GM12878 (cell line): ENCODE measurements at regions of chr5 and their contacts with region 1.

Region 1: GRCh38 chr5:151126199-151126645 is 31.4 kb downstream of the ANXA6 start:
- DNase-seq: peak; percentile 66
- ATAC-seq: peak; percentile 65
- H3K4me3 ChIP-seq: no peak overlapping the region
- H3K27ac ChIP-seq: peak overlapping the region; percentile 75
- H3K4me1 ChIP-seq: peaks cover 65% of the 10 kb centered on the region
- H3K27me3 ChIP-seq: no peaks in the 10 kb centered on the region
- CTCF ChIP-seq: peak; percentile 84 to 92 (median 87)
- EP300 ChIP-seq: no peak
- POLR2A ChIP-seq: peak; percentile 50; the same call in 1 of the 2 replicates
- RAD21 ChIP-seq: peak; percentile 93

Region 2: DNA sequence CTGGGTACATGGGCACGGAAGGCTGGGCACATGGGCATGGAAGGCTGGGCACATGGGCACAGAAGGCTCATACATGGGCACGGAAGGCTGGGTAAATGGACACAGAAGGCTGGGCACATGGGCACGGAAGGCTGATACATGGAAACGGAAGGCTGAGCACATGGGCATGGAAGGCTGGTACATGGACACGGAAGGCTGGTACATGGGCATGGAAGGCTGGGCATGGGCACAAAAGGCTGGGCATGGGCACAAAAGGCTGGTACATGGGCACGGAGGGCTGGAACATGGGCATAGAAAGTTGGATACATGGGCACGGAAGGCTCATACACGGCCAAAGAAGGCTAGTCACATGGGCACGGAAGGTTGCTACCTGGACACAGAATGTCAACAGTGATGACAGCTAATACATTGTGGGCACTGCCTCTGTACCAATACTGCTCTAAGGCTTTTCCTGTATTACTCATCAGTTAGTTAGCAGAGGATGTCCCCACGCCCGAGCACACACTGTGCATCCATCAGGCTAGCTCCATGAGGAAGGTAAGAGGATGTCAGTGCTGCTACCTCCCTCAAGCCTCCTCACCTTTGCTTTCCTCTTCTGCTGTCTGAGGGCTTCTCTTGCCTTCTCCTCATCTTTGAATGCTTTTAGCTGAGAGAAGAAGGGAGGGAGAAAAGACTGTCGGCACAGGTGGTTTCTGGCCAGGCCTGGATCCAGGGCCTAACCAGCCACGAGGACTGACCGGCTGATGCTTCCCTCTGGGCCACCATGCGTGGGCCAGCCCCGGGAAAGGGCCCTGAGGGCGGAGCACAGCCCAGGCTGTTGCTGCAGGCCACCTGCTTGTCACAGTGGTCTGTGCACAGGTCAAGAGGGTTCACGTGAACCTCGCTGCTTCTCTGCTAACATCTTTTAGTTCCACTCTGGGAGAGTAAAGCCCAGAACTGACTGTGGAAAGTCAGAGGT is 91.5 kb before region 1 on chr5:
- CTCF ChIA-PET with region 1: no interaction called
- POLR2A ChIA-PET with region 1: no interaction called
- RAD21 ChIA-PET with region 1: no interaction called
- SMC1A ChIA-PET with region 1: no interaction called
- in situ Hi-C with region 1: no loop called
- intact Hi-C with region 1: no loop called
- DNase-seq: no peak
- ATAC-seq: peak; percentile 27
- H3K4me3 ChIP-seq: no peak overlapping the region
- H3K27ac ChIP-seq: no peak overlapping the region
- H3K4me1 ChIP-seq: no peaks in the 10 kb centered on the region
- H3K27me3 ChIP-seq: no peaks in the 10 kb centered on the region
- CTCF ChIP-seq: no peak
- EP300 ChIP-seq: no peak
- POLR2A ChIP-seq: no peak; the same call in 1 of the 2 replicates
- RAD21 ChIP-seq: no peak

Region 3: DNA sequence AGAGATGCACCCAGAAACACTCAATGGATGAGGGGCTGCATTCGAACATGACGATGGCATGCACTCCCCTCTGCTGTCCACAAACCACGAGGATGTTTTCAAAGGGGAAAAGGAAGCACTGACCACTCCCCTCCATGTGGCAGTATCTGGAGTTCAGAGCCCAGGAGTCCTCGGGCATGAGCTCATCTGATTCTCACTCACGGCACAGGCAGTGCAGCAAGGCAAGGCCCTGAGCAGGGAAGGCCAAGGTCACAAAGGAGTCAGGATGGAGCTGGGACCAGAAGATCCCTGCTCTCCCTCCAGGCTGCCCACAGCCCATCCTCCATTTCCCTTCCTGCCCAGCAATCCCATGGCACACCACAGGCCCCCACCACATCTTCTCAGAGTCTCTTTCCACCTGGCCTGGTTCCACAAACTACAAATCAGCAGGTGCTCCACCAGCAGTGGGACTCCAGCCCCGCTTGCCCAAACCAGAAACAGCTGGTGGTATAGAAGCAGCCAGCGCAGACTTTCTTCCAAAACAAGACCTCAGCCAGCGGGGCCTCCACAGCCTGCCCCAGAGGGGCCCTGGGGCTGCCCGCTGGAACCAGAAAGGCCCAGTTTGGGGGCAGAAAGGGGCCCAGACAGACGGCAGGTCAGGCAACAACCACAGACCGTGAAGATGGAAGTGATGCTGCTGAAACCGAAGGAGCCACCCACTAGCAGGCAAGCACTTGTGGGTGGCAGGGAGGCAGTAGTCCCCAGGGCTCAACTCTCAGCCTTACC is 57.6 kb before region 1 on chr5:
- CTCF ChIA-PET with region 1: interaction called, 7 read pairs
- POLR2A ChIA-PET with region 1: interaction called, 3 read pairs
- RAD21 ChIA-PET with region 1: interaction called, 4 read pairs
- SMC1A ChIA-PET with region 1: interaction called, 13 read pairs
- in situ Hi-C with region 1: no loop called
- intact Hi-C with region 1: no loop called
- DNase-seq: no peak
- ATAC-seq: peak; percentile 78
- H3K4me3 ChIP-seq: peak overlapping the region; percentile 6; the same call in 1 of the 2 replicates
- H3K27ac ChIP-seq: peak overlapping the region; percentile 65
- H3K4me1 ChIP-seq: peaks cover 77% of the 10 kb centered on the region
- H3K27me3 ChIP-seq: no peaks in the 10 kb centered on the region
- CTCF ChIP-seq: no peak
- EP300 ChIP-seq: peak in 1 of 2 experiments; percentile 16; a peak in 1 of 4 replicates
- POLR2A ChIP-seq: no peak; the same call in none of the 2 replicates
- RAD21 ChIP-seq: no peak

Region 4: DNA sequence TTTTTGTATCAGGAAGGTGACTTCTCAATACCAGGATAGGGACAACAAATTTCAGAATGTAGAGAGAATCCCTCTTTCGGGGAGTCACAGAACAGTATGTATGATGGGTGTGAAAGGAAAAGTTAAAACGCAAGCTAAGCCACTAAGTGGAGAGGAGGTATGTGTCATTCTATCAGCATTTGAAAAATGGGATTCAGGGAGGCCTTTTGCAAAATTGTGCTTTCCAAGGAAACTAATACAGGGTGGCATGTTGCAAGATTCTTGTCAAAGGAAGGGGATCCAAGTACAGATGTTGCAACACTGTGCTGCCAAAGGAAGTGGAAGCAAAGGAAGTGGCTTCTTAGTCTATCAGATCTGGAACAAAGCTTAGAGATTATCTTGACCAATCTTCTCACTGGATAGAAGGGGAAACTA is 32.7 kb before region 1 on chr5:
- CTCF ChIA-PET with region 1: interaction called, 24 read pairs
- POLR2A ChIA-PET with region 1: interaction called, 7 read pairs
- RAD21 ChIA-PET with region 1: interaction called, 22 read pairs
- SMC1A ChIA-PET with region 1: interaction called, 25 read pairs
- in situ Hi-C with region 1: no loop called
- intact Hi-C with region 1: no loop called
- DNase-seq: no peak
- ATAC-seq: peak; percentile 2; the same call in 2 of the 3 replicates
- H3K4me3 ChIP-seq: peak overlapping the region; percentile 53
- H3K27ac ChIP-seq: peak overlapping the region; percentile 98
- H3K4me1 ChIP-seq: peaks cover 59% of the 10 kb centered on the region
- H3K27me3 ChIP-seq: no peaks in the 10 kb centered on the region
- CTCF ChIP-seq: no peak
- EP300 ChIP-seq: no peak
- POLR2A ChIP-seq: no peak
- RAD21 ChIP-seq: no peak

Region 5: GRCh38 chr5:151157426-151158286 is 31.4 kb after region 1 on chr5 and contains the start of gene ANXA6:
- CTCF ChIA-PET with region 1: interaction called, 1,107 read pairs
- POLR2A ChIA-PET with region 1: interaction called, 26 read pairs
- RAD21 ChIA-PET with region 1: interaction called, 306 read pairs
- SMC1A ChIA-PET with region 1: interaction called, 1,132 read pairs
- in situ Hi-C with region 1: loop called (anchors 5 kb)
- intact Hi-C with region 1: loop called (anchors 1 kb)
- DNase-seq: no peak
- ATAC-seq: peak; percentile 77
- H3K4me3 ChIP-seq: peak within 1 kb of the TSS; percentile 97
- H3K27ac ChIP-seq: peak within 1 kb of the TSS; percentile 89
- H3K4me1 ChIP-seq: peaks cover 26% of the 10 kb centered on the region
- H3K27me3 ChIP-seq: no peaks in the 10 kb centered on the region
- CTCF ChIP-seq: no peak
- EP300 ChIP-seq: no peak
- POLR2A ChIP-seq: peak; percentile 81
- RAD21 ChIP-seq: no peak
- polyA plus RNA-seq, gene ANXA6: 44.0 to 73.1 TPM

Region 6: DNA sequence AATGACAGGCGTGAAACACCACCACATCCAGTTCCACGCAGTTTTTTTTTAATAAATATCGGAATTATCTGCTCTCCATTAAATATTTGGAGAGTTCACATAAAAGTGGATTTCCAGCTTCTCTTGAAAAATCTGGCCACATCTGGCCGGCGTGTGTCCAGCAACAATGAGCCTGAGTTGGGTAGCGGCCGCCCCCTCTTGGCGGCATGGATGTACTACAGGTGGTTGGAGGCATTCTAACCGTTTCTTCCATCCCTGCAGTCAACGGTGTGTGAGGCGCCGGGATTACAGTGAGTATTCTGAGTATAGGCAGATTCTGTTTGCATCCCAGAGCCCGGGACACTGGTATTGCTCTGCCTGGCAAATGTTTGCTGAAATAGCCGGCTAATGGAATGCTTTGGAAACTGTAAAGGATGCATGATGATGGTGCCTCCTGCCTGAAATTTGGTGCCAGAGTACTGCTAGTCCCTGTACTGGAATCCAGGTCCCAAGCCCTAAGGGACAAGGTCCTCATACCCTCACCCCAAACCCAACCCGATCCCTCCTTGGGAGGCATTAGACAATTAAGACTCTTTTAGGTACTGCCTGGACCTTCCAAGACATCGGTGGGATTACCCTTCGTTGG is 113.1 kb after region 1 on chr5:
- CTCF ChIA-PET with region 1: interaction called, 60 read pairs
- POLR2A ChIA-PET with region 1: interaction called, 17 read pairs
- RAD21 ChIA-PET with region 1: interaction called, 37 read pairs
- SMC1A ChIA-PET with region 1: interaction called, 40 read pairs
- in situ Hi-C with region 1: no loop called
- intact Hi-C with region 1: loop called (anchors 2 kb)
- DNase-seq: no peak
- ATAC-seq: peak; percentile 61
- H3K4me3 ChIP-seq: no peak overlapping the region; the same call in 1 of the 2 replicates
- H3K27ac ChIP-seq: no peak overlapping the region
- H3K4me1 ChIP-seq: peaks cover 70% of the 10 kb centered on the region
- H3K27me3 ChIP-seq: no peaks in the 10 kb centered on the region
- CTCF ChIP-seq: peak; percentile 66 to 72 (median 72)
- EP300 ChIP-seq: no peak
- POLR2A ChIP-seq: no peak
- RAD21 ChIP-seq: peak; percentile 82

Region 7: DNA sequence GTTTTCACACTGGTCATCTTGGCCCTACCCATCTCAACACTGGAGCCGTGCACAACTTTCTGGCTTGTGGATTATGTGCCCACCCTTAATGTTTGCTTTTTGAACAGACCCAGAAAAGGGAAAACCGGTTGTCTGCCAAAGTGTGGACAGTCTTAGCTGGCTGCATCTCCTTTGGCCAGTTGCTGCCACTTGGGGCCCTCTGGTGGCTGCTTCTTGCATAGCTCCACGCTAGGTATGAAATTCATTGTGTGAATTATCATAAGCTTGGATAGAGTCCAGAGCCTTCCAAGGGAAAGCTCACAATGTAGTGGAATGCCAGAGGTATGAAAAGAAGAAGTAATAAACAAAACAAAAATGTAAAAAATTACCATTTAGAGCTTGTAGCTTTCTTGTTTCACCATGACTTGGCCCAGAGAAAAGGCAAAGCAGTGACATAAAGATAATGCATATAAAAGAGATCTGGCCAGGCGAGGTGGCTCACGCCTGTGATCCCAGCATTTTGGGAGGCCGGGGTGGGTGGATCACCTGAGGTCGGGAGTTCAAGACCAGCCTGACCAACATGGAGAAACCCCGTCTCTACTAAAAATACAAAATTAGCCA is 189.9 kb after region 1 on chr5:
- CTCF ChIA-PET with region 1: interaction called, 10 read pairs
- POLR2A ChIA-PET with region 1: no interaction called
- RAD21 ChIA-PET with region 1: interaction called, 11 read pairs
- SMC1A ChIA-PET with region 1: interaction called, 7 read pairs
- in situ Hi-C with region 1: no loop called
- intact Hi-C with region 1: loop called (anchors 5 kb)
- DNase-seq: peak; percentile 7
- ATAC-seq: peak; percentile 95
- H3K4me3 ChIP-seq: no peak overlapping the region
- H3K27ac ChIP-seq: no peak overlapping the region
- H3K4me1 ChIP-seq: no peaks in the 10 kb centered on the region
- H3K27me3 ChIP-seq: no peaks in the 10 kb centered on the region; a peak in 1 of 4 replicates
- CTCF ChIP-seq: peak; percentile 93 to 95 (median 94); a peak in 5 of 6 replicates
- EP300 ChIP-seq: no peak
- POLR2A ChIP-seq: no peak
- RAD21 ChIP-seq: peak; percentile 86